ENCODE measurements at regions of chr18 and their contacts with region 1.

Region 1: DNA sequence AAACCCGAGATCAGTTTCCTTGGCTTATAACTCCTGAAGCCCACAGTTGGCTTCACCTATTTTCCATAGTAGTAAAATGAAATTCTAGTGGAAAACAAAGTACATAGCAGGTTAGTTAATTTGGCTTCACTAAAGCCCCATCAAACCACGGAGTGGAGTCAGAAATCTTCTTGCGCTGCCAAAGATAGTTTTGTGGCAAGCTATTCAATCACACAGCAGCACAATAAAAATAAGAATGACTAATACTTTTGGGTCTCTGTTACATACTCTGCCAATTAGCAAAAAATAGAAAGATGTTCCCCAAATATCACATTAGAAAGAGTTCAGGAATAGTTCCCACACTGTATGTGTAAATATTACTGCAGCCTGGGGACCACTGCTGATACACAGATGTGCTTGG is 175.2 kb upstream of the NOL4 start:
- DNase-seq: no peak
- H3K4me3 ChIP-seq: no peak overlapping the region
- H3K27ac ChIP-seq: no peak overlapping the region
- H3K4me1 ChIP-seq: no peaks in the 10 kb centered on the region
- H3K27me3 ChIP-seq: no peaks in the 10 kb centered on the region
- CTCF ChIP-seq: no peak
- POLR2A ChIP-seq: no peak

Region 2: GRCh38 chr18:34342960-34343359 is 56.9 kb before region 1 on chr18:
- intact Hi-C with region 1: loop called (anchors 10 kb)
- DNase-seq: no peak
- H3K4me3 ChIP-seq: no peak overlapping the region
- H3K27ac ChIP-seq: no peak overlapping the region
- H3K4me1 ChIP-seq: no peaks in the 10 kb centered on the region
- H3K27me3 ChIP-seq: no peaks in the 10 kb centered on the region
- CTCF ChIP-seq: no peak
- POLR2A ChIP-seq: no peak